Endothelial cell of umbilical vein (primary cell): ENCODE measurements at regions of chr20 and their contacts with region 1.

Region 1: DNA sequence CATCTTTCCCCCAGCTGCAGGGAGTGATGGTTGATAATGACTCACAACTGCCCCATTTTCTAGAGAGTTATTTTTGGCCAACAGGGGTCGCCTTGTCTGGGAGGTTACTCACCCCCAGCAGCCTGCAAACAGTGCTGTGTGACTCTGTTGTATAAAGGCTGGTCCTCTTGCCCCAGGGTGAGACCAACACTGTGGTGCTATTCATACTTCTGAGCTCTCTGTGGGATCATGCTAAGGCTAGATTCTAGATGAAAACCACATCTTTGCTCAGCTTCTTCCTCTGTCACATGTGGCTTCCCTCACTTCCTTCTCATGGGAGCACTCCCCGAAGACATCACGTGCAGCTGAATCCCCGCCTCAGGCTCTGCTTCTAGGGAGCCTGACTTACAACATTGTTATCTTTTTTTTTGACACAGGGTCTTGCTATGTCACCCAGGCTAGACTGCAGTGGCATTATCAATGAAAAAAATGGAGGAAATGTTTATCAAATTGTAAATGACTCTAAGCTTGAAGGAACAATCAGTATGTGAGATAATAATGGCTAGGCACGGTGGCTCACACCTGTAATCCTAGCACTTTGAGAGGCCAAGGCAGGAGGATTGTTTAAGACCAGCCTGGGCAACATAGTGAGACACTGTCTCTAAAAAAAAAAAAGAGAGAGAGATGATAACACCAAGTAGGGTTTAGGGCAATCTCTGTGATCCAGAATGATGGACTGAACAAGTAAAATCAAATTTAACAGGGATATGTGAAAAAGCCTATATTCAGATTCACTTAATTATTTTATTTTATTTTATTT is 55.7 kb upstream of the SLC23A2 start:
- DNase-seq: peak; percentile 23
- H3K4me3 ChIP-seq: no peak overlapping the region
- H3K27ac ChIP-seq: no peak overlapping the region
- H3K4me1 ChIP-seq: peaks cover 6% of the 10 kb centered on the region
- H3K27me3 ChIP-seq: no peaks in the 10 kb centered on the region
- CTCF ChIP-seq: peak; percentile 43 to 47
- POLR2A ChIP-seq: no peak

Region 2: GRCh38 chr20:5030040-5030874 is 26.7 kb before region 1 on chr20:
- CTCF ChIA-PET with region 1: no interaction called
- POLR2A ChIA-PET with region 1: no interaction called
- dilution Hi-C with region 1: no loop called
- intact Hi-C with region 1: loop called (anchors 1 kb)
- DNase-seq: no peak
- H3K4me3 ChIP-seq: no peak overlapping the region
- H3K27ac ChIP-seq: no peak overlapping the region
- H3K4me1 ChIP-seq: no peaks in the 10 kb centered on the region
- H3K27me3 ChIP-seq: no peaks in the 10 kb centered on the region
- CTCF ChIP-seq: no peak
- POLR2A ChIP-seq: no peak

Region 3: DNA sequence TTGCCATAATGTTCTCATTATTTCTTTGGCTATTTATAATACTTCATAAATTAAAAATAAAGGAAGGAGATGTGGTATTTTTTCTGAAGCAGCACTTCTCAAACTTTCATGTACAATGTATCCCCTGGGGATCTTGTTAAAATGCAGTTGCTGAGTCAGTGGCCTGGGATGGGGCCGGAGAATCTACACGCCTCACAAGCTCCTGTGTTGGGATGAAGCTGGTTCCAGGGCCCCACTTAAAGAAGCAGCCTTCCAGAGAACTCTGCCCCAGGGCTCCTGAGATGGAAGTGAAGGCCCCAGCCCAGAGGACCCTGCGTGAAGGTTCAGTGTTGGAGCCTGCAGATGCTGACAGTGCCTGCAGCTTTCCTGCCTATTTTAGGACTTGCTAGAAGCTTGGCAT is 15.6 kb before region 1 on chr20:
- CTCF ChIA-PET with region 1: interaction called, 18 read pairs
- POLR2A ChIA-PET with region 1: no interaction called
- dilution Hi-C with region 1: no loop called
- intact Hi-C with region 1: no loop called
- DNase-seq: no peak
- H3K4me3 ChIP-seq: no peak overlapping the region
- H3K27ac ChIP-seq: no peak overlapping the region
- H3K4me1 ChIP-seq: no peaks in the 10 kb centered on the region
- H3K27me3 ChIP-seq: no peaks in the 10 kb centered on the region
- CTCF ChIP-seq: no peak
- POLR2A ChIP-seq: no peak